H1 (cell line): ENCODE measurements at regions of chr15 and their contacts with region 1.

Region 1: GRCh38 chr15:83657549-83657948 is 3.6 kb downstream of the ADAMTSL3 start:
- DNase-seq: peak in 1 of 2 experiments; percentile 63
- H3K4me3 ChIP-seq: no peak overlapping the region
- H3K27ac ChIP-seq: no peak overlapping the region
- H3K4me1 ChIP-seq: peaks cover 0 to 5% (median 2%) of the 10 kb centered on the region in 4 experiments; a peak in 5 of 7 replicates
- H3K27me3 ChIP-seq: peaks cover 10 to 33% (median 29%) of the 10 kb centered on the region in 4 experiments
- CTCF ChIP-seq: peak; percentile 70 to 81 (median 80)
- EP300 ChIP-seq: no peak
- POLR2A ChIP-seq: no peak
- RAD21 ChIP-seq: peak; percentile 79 to 84

Region 2: GRCh38 chr15:83644439-83644838 is 13.1 kb before region 1 on chr15:
- CTCF ChIA-PET with region 1: interaction called, 12 read pairs
- POLR2A ChIA-PET with region 1: interaction called, 3 read pairs
- DNase-seq: no peak
- H3K4me3 ChIP-seq: no peak overlapping the region
- H3K27ac ChIP-seq: no peak overlapping the region
- H3K4me1 ChIP-seq: no peaks in the 10 kb centered on the region
- H3K27me3 ChIP-seq: no peaks in the 10 kb centered on the region
- CTCF ChIP-seq: no peak
- EP300 ChIP-seq: no peak
- POLR2A ChIP-seq: no peak
- RAD21 ChIP-seq: no peak

Region 3: GRCh38 chr15:83685916-83686332 is 28.4 kb after region 1 on chr15:
- CTCF ChIA-PET with region 1: interaction called, 15 read pairs
- POLR2A ChIA-PET with region 1: no interaction called
- DNase-seq: no peak
- H3K4me3 ChIP-seq: no peak overlapping the region
- H3K27ac ChIP-seq: no peak overlapping the region
- H3K4me1 ChIP-seq: no peaks in the 10 kb centered on the region
- H3K27me3 ChIP-seq: no peaks in the 10 kb centered on the region
- CTCF ChIP-seq: no peak
- EP300 ChIP-seq: no peak
- POLR2A ChIP-seq: no peak
- RAD21 ChIP-seq: no peak

Region 4: DNA sequence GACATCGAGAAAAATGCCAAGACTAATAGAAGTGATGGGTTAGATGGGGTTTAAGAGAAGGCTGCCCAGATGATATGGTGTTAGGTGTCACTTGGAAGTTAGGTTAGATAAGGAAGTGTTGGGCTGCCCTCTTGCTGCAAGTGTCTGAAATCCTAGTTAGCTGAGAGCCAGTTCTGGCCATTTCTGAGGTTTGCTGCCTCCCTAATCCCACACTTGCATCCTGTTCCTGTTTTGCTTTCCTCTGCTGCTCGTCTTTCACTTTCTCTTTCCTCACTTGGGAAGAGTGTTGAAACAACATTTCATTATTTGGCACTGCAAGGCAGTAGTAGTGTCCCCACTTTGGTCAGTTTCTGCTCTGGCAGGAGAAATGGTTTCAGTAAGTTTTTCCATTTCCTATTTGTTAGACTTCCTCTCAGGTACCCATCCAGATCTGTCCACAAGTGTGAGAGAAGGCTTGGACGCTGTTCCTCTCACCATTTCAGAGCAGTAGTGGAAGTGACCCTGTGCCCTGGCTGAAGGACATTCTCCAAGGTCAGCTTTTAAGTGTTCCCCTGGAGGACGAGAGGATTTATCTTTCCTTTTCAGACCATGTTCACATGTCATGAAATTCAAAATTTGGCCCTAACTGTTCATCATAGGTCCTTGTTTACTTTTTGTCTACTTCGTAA is 89.6 kb after region 1 on chr15:
- CTCF ChIA-PET with region 1: interaction called, 14 read pairs
- POLR2A ChIA-PET with region 1: no interaction called
- DNase-seq: no peak
- H3K4me3 ChIP-seq: no peak overlapping the region
- H3K27ac ChIP-seq: no peak overlapping the region
- H3K4me1 ChIP-seq: no peaks in the 10 kb centered on the region
- H3K27me3 ChIP-seq: no peaks in the 10 kb centered on the region
- CTCF ChIP-seq: peak in 2 of 3 experiments; percentile 60 to 62; a peak in 3 of 4 replicates
- EP300 ChIP-seq: no peak
- POLR2A ChIP-seq: no peak
- RAD21 ChIP-seq: peak; percentile 76 to 81

Region 5: DNA sequence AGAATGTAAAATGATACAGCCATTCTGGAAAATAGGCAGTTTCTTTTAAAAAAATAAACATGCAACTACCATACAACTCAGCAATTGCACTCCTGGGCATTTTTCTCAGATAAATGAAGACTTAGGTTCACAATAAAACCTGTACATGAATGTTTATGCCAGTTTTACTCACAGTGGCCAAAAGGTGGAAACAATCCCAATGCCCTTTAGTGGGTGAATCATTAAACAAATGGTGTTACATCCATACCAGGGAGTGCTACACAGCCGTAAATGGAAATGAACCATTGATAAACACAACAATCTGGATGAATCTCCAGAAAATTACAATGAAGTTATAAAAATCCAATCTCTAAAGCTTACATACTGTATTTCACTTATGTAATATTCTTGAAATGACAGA is 136.7 kb after region 1 on chr15:
- CTCF ChIA-PET with region 1: no interaction called
- POLR2A ChIA-PET with region 1: no interaction called
- DNase-seq: no peak
- H3K4me3 ChIP-seq: no peak overlapping the region
- H3K27ac ChIP-seq: no peak overlapping the region
- H3K4me1 ChIP-seq: no peaks in the 10 kb centered on the region
- H3K27me3 ChIP-seq: no peaks in the 10 kb centered on the region
- CTCF ChIP-seq: no peak
- EP300 ChIP-seq: no peak
- POLR2A ChIP-seq: no peak
- RAD21 ChIP-seq: no peak

Region 6: GRCh38 chr15:83837945-83838571 is 180.5 kb after region 1 on chr15:
- CTCF ChIA-PET with region 1: interaction called, 20 read pairs
- POLR2A ChIA-PET with region 1: no interaction called
- DNase-seq: peak; percentile 36 to 64
- H3K4me3 ChIP-seq: no peak overlapping the region
- H3K27ac ChIP-seq: no peak overlapping the region
- H3K4me1 ChIP-seq: no peaks in the 10 kb centered on the region
- H3K27me3 ChIP-seq: no peaks in the 10 kb centered on the region
- CTCF ChIP-seq: peak; percentile 77 to 85 (median 79)
- EP300 ChIP-seq: no peak
- POLR2A ChIP-seq: no peak
- RAD21 ChIP-seq: peak; percentile 64 to 76

Region 7: DNA sequence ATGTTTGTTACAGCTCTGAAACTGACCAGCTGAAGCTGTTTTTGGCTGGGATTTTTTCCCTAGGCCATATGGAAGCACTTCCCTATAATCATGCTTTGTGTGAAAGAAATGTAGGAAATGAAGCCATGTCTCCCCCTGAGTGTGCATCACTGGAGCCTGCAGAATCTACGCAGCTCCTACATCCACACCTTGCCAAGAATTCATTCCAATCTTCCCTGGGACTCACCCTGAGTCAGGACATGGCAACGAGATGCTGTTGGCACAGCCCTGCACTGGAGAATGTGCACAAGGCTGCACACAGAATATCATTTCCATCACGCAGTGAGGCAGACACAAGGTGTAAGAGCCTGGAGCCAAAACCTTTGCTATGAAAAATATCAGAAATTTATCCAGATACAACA is 185.9 kb after region 1 on chr15:
- CTCF ChIA-PET with region 1: interaction called, 15 read pairs
- POLR2A ChIA-PET with region 1: no interaction called
- DNase-seq: no peak
- H3K4me3 ChIP-seq: no peak overlapping the region
- H3K27ac ChIP-seq: no peak overlapping the region
- H3K4me1 ChIP-seq: no peaks in the 10 kb centered on the region
- H3K27me3 ChIP-seq: no peaks in the 10 kb centered on the region
- CTCF ChIP-seq: no peak
- EP300 ChIP-seq: no peak
- POLR2A ChIP-seq: no peak
- RAD21 ChIP-seq: no peak

Region 8: DNA sequence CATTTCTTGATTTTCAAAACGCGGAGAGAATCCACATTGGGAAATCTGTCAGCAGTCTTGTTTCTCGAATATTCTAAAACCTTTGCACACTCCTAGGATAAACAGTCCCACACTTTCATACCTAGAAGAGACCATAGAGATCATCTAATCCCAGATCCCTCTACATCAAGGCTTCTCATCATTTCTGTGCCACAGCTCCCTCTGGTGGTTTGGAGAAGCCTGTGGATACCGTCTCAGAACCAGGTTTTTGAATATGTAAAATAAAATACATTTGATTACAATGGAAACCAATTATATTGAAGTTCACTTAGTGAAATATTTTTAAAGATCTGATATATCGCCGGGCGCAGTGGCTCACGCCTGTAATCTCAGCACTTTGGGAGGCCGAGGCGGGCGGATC is 366.1 kb after region 1 on chr15:
- CTCF ChIA-PET with region 1: interaction called, 10 read pairs
- POLR2A ChIA-PET with region 1: interaction called, 3 read pairs
- DNase-seq: peak in 1 of 2 experiments; percentile 48
- H3K4me3 ChIP-seq: no peak overlapping the region
- H3K27ac ChIP-seq: no peak overlapping the region
- H3K4me1 ChIP-seq: no peaks in the 10 kb centered on the region
- H3K27me3 ChIP-seq: no peaks in the 10 kb centered on the region
- CTCF ChIP-seq: peak in 2 of 3 experiments; percentile 54 to 67; a peak in 3 of 4 replicates
- EP300 ChIP-seq: no peak
- POLR2A ChIP-seq: no peak
- RAD21 ChIP-seq: peak; percentile 54 to 56